H1 (cell line): ENCODE measurements at regions of chr1 and their contacts with region 1.

Region 1: DNA sequence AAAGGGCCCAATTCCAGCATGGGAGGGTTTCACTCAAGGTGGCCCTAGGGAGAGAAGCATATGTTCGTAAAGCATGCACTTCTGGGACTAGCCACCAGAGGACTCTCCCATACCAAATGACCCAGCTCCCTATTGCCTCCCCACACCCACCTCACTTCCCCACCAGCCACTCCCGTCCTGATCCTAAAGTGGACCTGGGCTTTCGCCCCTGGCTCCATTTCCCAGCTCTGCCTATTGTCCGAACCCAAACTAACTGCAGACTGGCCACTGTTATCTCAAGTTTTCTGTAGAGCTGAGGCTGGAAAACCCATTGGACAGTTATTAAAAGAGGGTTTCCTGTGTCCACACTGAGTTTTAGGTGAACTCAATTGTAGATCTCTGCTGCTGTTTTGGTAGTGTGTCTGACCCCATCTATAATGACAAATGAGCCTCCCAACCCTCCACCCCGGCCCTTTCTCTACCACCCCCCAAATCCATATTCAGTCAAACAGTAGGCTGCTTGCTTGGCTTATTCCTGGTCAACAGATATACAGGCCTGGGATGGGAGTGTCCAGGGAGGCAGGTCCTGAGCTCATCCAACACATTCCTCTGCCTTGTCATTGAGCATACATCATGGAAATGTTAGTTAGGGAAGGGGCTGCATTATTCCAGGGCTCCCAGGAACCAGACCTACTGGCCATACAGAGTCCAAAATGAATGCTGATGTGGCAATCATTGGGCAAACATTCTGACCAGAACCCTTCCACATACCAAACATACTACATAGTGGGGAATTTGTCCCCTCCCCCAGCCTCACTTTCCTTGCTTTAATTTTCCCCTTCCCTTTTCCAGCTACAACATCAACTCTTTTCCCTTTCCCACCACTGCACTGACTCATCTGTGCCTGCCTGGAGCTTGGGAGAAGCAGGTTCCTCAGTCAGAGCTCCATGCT is 59.2 kb downstream of the ABCA4 start:
- DNase-seq: peak in 1 of 2 experiments; percentile 79
- H3K4me3 ChIP-seq: no peak overlapping the region
- H3K27ac ChIP-seq: no peak overlapping the region
- H3K4me1 ChIP-seq: peaks cover 0 to 4% (median 1%) of the 10 kb centered on the region in 4 experiments; a peak in 1 of 7 replicates
- H3K27me3 ChIP-seq: peaks cover 1 to 17% (median 10%) of the 10 kb centered on the region in 4 experiments; a peak in 6 of 7 replicates
- CTCF ChIP-seq: peak; percentile 79 to 95 (median 93)
- EP300 ChIP-seq: no peak
- POLR2A ChIP-seq: no peak
- RAD21 ChIP-seq: peak; percentile 95 to 96

Region 2: GRCh38 chr1:93964777-93965200 is 97.0 kb before region 1 on chr1:
- CTCF ChIA-PET with region 1: no interaction called
- POLR2A ChIA-PET with region 1: no interaction called
- DNase-seq: no peak
- H3K4me3 ChIP-seq: no peak overlapping the region
- H3K27ac ChIP-seq: no peak overlapping the region
- H3K4me1 ChIP-seq: no peaks in the 10 kb centered on the region
- H3K27me3 ChIP-seq: no peaks in the 10 kb centered on the region
- CTCF ChIP-seq: no peak
- EP300 ChIP-seq: no peak
- POLR2A ChIP-seq: no peak
- RAD21 ChIP-seq: no peak

Region 3: GRCh38 chr1:94045465-94046056 is 16.2 kb before region 1 on chr1:
- CTCF ChIA-PET with region 1: interaction called, 409 read pairs
- POLR2A ChIA-PET with region 1: no interaction called
- DNase-seq: peak; percentile 81 to 84
- H3K4me3 ChIP-seq: peak overlapping the region in 1 of 4 experiments; percentile 34; a peak in 2 of 8 replicates
- H3K27ac ChIP-seq: no peak overlapping the region
- H3K4me1 ChIP-seq: peaks cover 0 to 7% (median 5%) of the 10 kb centered on the region in 4 experiments; a peak in 6 of 7 replicates
- H3K27me3 ChIP-seq: no peaks in the 10 kb centered on the region
- CTCF ChIP-seq: peak; percentile 51 to 78 (median 62)
- EP300 ChIP-seq: no peak
- POLR2A ChIP-seq: no peak
- RAD21 ChIP-seq: peak; percentile 73 to 77

Region 4: GRCh38 chr1:94092210-94092613 is 30.4 kb after region 1 on chr1:
- CTCF ChIA-PET with region 1: interaction called, 15 read pairs
- POLR2A ChIA-PET with region 1: no interaction called
- DNase-seq: no peak
- H3K4me3 ChIP-seq: no peak overlapping the region
- H3K27ac ChIP-seq: no peak overlapping the region
- H3K4me1 ChIP-seq: peaks cover 0 to 8% (median 6%) of the 10 kb centered on the region in 4 experiments; a peak in 4 of 7 replicates
- H3K27me3 ChIP-seq: no peaks in the 10 kb centered on the region; a peak in 2 of 7 replicates
- CTCF ChIP-seq: no peak
- EP300 ChIP-seq: no peak
- POLR2A ChIP-seq: no peak
- RAD21 ChIP-seq: no peak

Region 5: GRCh38 chr1:94191216-94191615 is 129.4 kb after region 1 on chr1:
- CTCF ChIA-PET with region 1: interaction called, 25 read pairs
- POLR2A ChIA-PET with region 1: no interaction called
- DNase-seq: no peak
- H3K4me3 ChIP-seq: no peak overlapping the region
- H3K27ac ChIP-seq: no peak overlapping the region
- H3K4me1 ChIP-seq: no peaks in the 10 kb centered on the region
- H3K27me3 ChIP-seq: no peaks in the 10 kb centered on the region; a peak in 1 of 7 replicates
- CTCF ChIP-seq: no peak
- EP300 ChIP-seq: no peak
- POLR2A ChIP-seq: no peak
- RAD21 ChIP-seq: no peak

Region 6: DNA sequence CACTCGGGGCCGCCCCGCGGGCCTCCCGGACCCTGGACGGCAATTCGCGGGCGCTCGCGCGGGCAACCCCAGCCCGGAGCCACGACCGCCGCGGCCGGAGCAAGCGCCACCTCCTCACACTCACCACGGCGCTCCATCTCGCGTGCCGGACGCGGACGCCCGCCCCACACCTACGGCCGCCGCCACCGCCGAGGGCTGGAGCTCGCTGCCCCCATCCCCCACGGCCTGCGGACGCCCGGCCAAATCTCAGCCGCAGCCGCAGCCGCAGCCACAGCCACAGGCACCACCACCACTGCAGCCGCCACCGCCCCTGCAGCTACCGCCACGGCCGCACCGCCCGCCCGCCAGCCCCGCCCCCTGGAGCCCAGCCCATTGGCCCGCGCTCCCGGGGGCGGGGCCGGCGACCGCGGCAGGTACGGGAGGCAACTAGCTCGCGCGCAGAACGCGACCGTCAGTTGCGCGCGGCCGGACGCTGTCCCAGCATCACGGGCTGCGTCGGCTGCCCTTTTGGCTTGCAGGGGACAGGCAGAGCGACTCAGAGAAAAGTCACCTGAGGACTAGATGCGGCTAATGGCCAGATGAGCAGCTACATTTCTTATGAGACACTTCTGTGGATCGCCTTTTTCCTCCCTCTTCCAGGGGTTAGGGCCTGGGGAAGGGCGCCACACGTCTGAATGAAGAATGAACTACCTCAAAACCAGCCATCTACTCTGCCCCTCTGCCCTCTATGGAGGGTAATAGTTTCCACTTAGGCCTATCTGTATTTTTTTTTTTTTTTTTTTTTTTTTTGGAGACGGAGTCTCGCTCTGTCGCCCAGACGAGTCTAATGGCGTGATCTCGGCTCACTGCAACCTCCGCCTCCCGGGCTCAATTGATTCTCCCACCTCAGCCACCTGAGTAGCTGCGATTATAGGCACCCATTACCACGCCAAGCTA is 175.8 kb after region 1 on chr1 and contains the start of gene ARHGAP29:
- CTCF ChIA-PET with region 1: interaction called, 151 read pairs
- POLR2A ChIA-PET with region 1: interaction called, 4 read pairs
- DNase-seq: peak in 1 of 2 experiments; percentile 89
- H3K4me3 ChIP-seq: peak within 1 kb of the TSS; percentile 53 to 84 (median 70)
- H3K27ac ChIP-seq: no peak within 1 kb of the TSS
- H3K4me1 ChIP-seq: peaks cover 0 to 2% (median 0%) of the 10 kb centered on the region in 4 experiments; a peak in 1 of 7 replicates
- H3K27me3 ChIP-seq: peaks cover 17 to 40% (median 32%) of the 10 kb centered on the region in 4 experiments
- CTCF ChIP-seq: peak in 1 of 3 experiments; percentile 11; a peak in 2 of 4 replicates
- EP300 ChIP-seq: no peak
- POLR2A ChIP-seq: peak in 1 of 2 experiments; percentile 76; a peak in 2 of 3 replicates
- RAD21 ChIP-seq: peak; percentile 20 to 22; a peak in 2 of 4 replicates
- total RNA-seq, gene ARHGAP29: 2.9 and 3.2 TPM in 2 replicates

Region 7: GRCh38 chr1:94299627-94300552 is 238.1 kb after region 1 on chr1:
- CTCF ChIA-PET with region 1: interaction called, 12 read pairs
- POLR2A ChIA-PET with region 1: no interaction called
- DNase-seq: no peak
- H3K4me3 ChIP-seq: no peak overlapping the region
- H3K27ac ChIP-seq: no peak overlapping the region
- H3K4me1 ChIP-seq: peaks cover 0 to 8% (median under 1%) of the 10 kb centered on the region in 4 experiments; a peak in 1 of 7 replicates
- H3K27me3 ChIP-seq: no peaks in the 10 kb centered on the region
- CTCF ChIP-seq: no peak
- EP300 ChIP-seq: no peak
- POLR2A ChIP-seq: no peak
- RAD21 ChIP-seq: no peak